Activated CD4-positive, alpha-beta memory T cell treated with anti-CD3 and anti-CD28 coated beads, Interleukin-2, amount 10 ng/mL, durations not matched to agents 7 days and 5 days (primary cell): ENCODE measurements at regions of chr2 and their contacts with region 1.

Region 1: DNA sequence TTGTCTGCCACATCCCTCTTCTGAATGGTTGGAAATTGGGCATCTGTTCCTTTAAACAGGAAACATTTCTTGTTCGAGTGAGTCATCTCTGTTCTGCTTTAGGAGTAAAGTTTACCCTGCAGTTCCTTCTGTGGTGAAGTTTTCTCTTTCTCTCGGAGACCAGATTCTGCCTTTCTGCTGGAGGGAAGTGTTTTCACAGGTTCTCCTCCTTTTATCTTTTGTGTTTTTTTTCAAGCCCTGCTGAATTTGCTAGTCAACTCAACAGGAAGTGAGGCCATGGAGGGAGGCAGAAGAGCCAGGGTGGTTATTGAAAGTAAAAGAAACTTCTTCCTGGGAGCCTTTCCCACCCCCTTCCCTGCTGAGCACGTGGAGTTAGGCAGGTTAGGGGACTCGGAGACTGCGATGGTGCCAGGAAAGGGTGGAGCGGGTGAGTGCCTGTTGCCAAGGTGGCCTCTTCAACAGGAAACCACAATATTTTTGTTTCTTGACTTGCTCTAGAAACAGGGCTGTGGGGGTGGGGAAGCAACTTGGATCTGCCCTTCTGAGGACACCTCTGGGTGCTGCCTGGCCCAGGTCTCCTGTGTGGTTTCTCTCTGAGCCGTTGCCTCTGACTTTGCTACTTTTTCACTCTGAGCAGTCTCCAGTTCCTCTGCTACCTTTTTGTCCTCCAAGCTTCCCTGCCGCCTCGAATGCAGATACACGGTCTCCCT is 2.2 kb upstream of the CASP8 start:
- DNase-seq: peak; percentile 96
- H3K4me3 Mint-ChIP-seq: peak overlapping the region; percentile 81
- H3K27ac Mint-ChIP-seq: peak overlapping the region; percentile 98
- H3K4me1 Mint-ChIP-seq: peaks cover 68% of the 10 kb centered on the region
- H3K27me3 Mint-ChIP-seq: no peaks in the 10 kb centered on the region

Region 2: GRCh38 chr2:201130524-201131186 is 127.5 kb before region 1 on chr2:
- CTCF ChIA-PET with region 1: no interaction called
- POLR2A ChIA-PET with region 1: interaction called, 32 read pairs
- DNase-seq: peak; percentile 50
- H3K4me3 Mint-ChIP-seq: peak overlapping the region; percentile 83
- H3K27ac Mint-ChIP-seq: peak overlapping the region; percentile 90
- H3K4me1 Mint-ChIP-seq: peaks cover 79% of the 10 kb centered on the region
- H3K27me3 Mint-ChIP-seq: no peaks in the 10 kb centered on the region

Region 3: GRCh38 chr2:201275990-201276389 is 17.9 kb after region 1 on chr2:
- CTCF ChIA-PET with region 1: interaction called, 16 read pairs
- POLR2A ChIA-PET with region 1: interaction called, 72 read pairs
- DNase-seq: no peak
- H3K4me3 Mint-ChIP-seq: no peak overlapping the region
- H3K27ac Mint-ChIP-seq: no peak overlapping the region
- H3K4me1 Mint-ChIP-seq: peaks cover 50% of the 10 kb centered on the region
- H3K27me3 Mint-ChIP-seq: no peaks in the 10 kb centered on the region

Region 4: GRCh38 chr2:201444746-201445465 is 186.8 kb after region 1 on chr2:
- CTCF ChIA-PET with region 1: no interaction called
- POLR2A ChIA-PET with region 1: interaction called, 30 read pairs
- DNase-seq: no peak
- H3K4me3 Mint-ChIP-seq: no peak overlapping the region
- H3K27ac Mint-ChIP-seq: no peak overlapping the region
- H3K4me1 Mint-ChIP-seq: peaks cover 44% of the 10 kb centered on the region
- H3K27me3 Mint-ChIP-seq: no peaks in the 10 kb centered on the region

Region 5: DNA sequence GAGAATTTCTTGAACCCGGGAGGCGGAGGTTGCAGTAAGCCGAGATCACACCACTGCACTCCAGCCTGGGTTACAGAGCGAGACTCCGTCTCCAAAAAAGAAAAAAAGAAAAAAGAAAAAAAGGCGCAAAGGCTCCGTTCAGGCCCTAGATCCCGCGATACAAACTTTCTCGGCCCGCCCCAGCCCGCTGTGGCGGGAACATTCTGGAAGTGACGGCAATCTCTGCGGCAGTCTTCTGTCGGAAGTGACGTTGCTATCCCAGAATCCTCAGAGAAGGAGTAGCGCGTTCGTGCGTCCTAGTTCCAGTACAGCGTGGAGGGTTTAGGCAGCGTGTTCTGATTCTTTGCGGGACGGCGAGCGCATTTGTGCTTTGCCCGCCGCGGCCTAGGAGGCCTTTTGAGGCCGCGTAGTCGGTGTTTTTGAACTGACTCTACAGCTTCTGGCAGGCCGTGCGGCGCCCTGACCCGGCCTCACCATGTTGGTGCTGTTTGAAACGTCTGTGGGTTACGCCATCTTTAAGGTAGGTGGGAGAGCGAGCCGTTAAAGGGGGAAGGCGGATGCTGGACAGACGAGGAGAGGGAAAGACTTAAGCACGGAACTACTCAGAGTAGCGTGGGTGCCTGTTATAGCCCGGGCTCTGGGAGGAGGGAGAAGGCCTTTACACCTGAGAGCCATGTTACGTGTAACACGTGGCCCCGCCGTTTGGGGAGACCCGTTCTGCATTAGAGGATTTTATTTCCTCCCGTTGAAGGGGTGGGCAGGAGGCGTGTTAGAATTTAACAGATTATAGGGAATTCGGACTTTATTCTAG is 1007.6 kb after region 1 on chr2 and contains the start of gene NOP58:
- CTCF ChIA-PET with region 1: no interaction called
- POLR2A ChIA-PET with region 1: interaction called, 12 read pairs
- DNase-seq: peak; percentile 94
- H3K4me3 Mint-ChIP-seq: peak within 1 kb of the TSS; percentile 49
- H3K27ac Mint-ChIP-seq: peak within 1 kb of the TSS; percentile 64
- H3K4me1 Mint-ChIP-seq: peaks cover 25% of the 10 kb centered on the region
- H3K27me3 Mint-ChIP-seq: no peaks in the 10 kb centered on the region
- total RNA-seq, gene NOP58: 103 to 108 TPM